Posterior cingulate gyrus (tissue), 11 donors: ENCODE measurements at regions of chr10 and their contacts with region 1.

Region 1: GRCh38 chr10:21265621-21266020 is 259.9 kb downstream of the SKIDA1 start:
- DNase-seq: no peak

Region 2: DNA sequence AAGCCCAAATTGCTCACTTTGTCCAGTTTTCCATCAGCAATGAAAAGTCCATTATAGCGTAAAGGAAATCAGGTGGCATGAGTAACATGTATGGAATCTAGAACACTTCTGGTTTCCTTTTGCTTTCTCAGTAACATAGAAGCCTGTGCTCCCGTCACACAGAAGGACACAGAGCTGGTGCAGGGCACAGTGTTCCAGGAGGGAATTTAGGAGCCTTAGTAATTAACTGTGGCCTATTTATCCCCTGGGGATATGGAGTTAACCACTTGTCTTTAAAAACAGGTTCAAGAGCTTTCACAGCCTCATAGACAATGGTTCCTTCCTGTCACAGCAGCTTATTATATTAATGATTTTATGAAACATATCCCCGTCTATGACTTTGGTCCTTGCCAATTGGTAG is 558.4 kb before region 1 on chr10:
- intact Hi-C with region 1: no loop called
- DNase-seq: no peak

Region 3: GRCh38 chr10:20858292-20859124 is 407.1 kb before region 1 on chr10:
- intact Hi-C with region 1: loop called (anchors 10 kb)
- DNase-seq: no peak

Region 4: GRCh38 chr10:21173812-21174714 is 91.6 kb before region 1 on chr10:
- intact Hi-C with region 1: loop called (anchors 10 kb)
- DNase-seq: peak; percentile 26 to 96 (median 76)

Region 5: DNA sequence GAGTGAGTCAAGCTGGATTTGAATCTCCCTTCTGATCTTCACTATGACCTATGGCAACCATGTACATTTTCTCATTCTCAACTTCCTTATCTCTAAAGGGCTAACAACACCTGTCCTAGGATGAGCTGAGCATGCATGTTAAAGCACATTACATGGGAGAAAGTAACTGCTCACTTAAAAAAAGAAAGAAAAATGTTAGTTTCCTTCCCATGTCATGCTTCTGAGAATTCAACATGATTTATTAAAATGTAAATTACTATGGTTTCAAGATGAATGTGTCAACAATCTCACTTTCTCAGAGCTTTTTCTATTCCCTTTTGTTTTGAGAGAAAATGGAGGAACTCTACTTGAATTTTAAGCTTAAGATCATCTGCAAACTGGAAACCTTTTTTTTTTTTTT is 35.4 kb before region 1 on chr10:
- intact Hi-C with region 1: no loop called
- DNase-seq: no peak

Region 6: GRCh38 chr10:22097696-22098095 is 832.1 kb after region 1 on chr10:
- intact Hi-C with region 1: no loop called
- DNase-seq: no peak